ENCODE measurements at regions of chr10 and their contacts with region 1.

Region 1: DNA sequence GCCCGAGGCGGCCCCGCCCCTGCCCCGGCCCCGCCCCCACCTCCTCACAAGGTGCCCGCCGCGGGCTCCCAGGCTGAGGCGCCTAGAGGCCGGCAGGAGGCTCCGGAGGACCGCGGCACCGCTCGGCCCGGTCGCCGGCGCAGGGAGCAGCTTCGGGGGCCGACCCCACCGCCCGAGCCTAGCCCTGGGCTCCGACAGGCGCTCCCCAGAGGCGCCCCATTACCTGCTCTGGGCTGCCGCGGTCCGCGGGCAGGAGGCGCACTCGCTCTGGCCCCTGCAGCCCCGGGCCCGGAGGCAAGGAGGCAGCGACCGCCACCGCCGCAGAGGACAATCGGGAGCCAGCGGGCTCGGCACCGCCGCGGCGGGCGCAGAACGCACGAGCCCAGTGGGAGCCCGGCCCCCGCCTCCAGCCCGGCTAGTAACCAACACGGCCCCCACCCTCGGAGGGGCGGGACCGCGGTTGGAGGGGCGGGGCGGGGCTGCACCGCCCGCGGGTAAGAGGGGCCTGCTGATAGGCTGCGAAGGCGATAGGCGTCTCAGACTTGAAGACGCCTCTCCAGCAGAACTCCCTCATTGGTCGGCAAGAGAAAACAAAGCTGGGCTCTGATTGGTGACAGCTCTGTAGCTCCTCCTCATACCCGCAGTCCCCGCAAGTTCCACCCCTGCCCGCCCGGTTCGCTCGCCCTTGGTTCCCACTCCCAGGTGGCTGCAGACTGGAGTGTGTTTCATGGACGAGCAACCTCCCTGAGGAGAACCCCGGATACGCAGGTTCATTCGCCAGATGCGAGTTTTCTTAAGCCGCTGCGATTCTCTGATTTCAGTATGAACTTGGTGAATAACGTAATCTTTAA is at the start of gene MPP7:
- DNase-seq: peak; percentile 92 to 98 (median 96)
- ATAC-seq: peak; percentile 90 to 93 (median 92)
- H3K4me3 ChIP-seq: peak within 1 kb of the TSS; percentile 67 to 83
- H3K4me3 Mint-ChIP-seq: peak within 1 kb of the TSS; percentile 85 to 92 (median 85)
- H3K27ac ChIP-seq: peak within 1 kb of the TSS; percentile 54
- H3K27ac Mint-ChIP-seq: peak within 1 kb of the TSS; percentile 88 to 95
- H3K4me1 ChIP-seq: peaks cover 7 to 16% of the 10 kb centered on the region in 2 experiments
- H3K4me1 Mint-ChIP-seq: peaks cover 60 to 80% (median 75%) of the 10 kb centered on the region in 3 donors
- H3K27me3 ChIP-seq: no peaks in the 10 kb centered on the region
- H3K27me3 Mint-ChIP-seq: no peaks in the 10 kb centered on the region
- total RNA-seq, gene MPP7: 22.8 to 35.8 (median 26.0) TPM

Region 2: DNA sequence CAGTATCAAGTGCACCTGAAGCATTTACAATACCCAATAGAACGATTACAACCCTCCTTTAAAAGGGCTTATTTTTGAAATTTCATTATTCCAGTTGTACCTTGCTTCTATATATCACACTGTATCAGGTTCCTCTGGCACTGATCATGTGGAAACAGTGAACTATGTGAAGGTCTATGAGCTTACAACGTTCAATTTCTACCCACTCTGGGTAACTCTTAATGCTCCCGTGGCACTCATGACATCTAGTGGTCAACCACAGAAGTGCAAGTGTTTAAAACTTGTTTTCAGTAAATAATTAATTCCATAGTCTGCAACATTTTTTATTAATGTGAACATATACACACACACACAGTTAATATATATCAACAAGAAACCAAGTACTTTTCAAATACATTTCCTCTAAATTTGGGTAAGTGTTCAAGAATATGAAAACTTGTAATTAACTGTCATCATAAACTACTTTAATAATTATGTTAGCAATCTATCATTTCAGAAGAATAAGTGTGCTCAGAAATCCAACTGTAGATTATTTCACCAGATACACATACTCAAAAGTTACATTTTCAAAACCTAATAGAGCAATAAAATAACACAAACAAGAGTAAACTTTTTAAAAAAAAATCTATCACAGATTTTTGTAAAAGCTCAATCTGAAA is 61.0 kb before region 1 on chr10:
- CTCF ChIA-PET with region 1: interaction called, 3 to 17 read pairs
- POLR2A ChIA-PET with region 1: no interaction called
- DNase-seq: peak in 22 of 35 experiments; percentile 3 to 72 (median 22)
- ATAC-seq: peak; percentile 63 to 75 (median 66)
- H3K4me3 ChIP-seq: no peak overlapping the region
- H3K4me3 Mint-ChIP-seq: no peak overlapping the region
- H3K27ac ChIP-seq: no peak overlapping the region
- H3K27ac Mint-ChIP-seq: no peak overlapping the region
- H3K4me1 ChIP-seq: peaks cover 0 to 14% of the 10 kb centered on the region in 2 experiments
- H3K4me1 Mint-ChIP-seq: peaks cover 32 to 42% (median 38%) of the 10 kb centered on the region in 3 donors
- H3K27me3 ChIP-seq: no peaks in the 10 kb centered on the region
- H3K27me3 Mint-ChIP-seq: no peaks in the 10 kb centered on the region

Region 3: DNA sequence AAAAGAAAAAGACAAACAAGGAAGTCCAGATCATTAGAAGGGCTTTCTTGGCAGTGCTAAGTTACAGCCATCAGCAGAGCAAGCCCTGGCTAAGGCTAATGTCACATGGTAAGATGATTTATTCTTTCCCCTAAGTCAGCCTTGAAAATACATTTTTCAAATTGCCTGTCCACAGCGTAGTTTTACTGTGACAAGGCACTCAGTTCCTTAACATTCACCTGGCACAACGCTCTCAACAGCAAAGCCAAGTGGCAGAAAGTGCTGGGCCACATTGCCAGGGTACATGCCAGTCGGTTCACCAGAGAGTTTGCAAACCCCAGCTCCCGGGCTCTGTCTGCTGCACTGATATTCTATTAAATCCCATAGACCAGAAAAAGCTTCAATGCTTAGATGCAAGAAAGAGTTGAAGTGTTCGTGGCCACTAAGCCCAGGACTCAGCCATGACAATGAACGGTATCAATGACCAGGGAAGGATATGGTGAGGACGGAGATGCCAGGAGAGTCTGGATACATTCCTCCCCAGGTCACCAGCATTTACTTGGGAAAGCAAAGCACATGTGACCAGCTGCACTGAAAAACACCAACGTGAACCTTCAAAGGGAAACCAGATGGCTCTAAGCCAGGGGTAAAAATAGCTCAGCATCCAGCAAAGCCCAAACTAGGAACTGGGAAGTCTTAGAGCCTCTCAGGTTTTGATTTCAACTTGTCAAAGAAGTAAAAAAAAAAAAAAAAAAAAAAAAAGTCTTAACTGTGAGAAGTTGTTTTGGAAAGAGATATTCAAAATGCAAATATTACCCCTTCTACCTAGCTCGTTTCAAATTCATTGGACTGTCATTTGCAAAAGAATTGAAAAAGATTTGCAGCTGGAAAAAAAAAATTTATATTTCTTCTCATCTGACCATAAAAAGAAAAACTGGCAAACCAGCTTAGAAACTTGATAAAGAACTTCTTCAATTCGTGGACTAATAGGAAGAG is 23.9 kb after region 1 on chr10:
- CTCF ChIA-PET with region 1: interaction called, 4 to 91 read pairs
- POLR2A ChIA-PET with region 1: interaction called, 18 to 127 read pairs
- DNase-seq: no peak
- ATAC-seq: peak in 1 of 4 experiments; percentile 30
- H3K4me3 ChIP-seq: no peak overlapping the region
- H3K4me3 Mint-ChIP-seq: peak overlapping the region in 1 of 3 donors; percentile 66
- H3K27ac ChIP-seq: no peak overlapping the region
- H3K27ac Mint-ChIP-seq: peak overlapping the region in 1 of 2 donors; percentile 71
- H3K4me1 ChIP-seq: peaks cover 28 to 30% of the 10 kb centered on the region in 2 experiments
- H3K4me1 Mint-ChIP-seq: peaks cover 69 to 81% (median 74%) of the 10 kb centered on the region in 3 donors
- H3K27me3 ChIP-seq: no peaks in the 10 kb centered on the region
- H3K27me3 Mint-ChIP-seq: no peaks in the 10 kb centered on the region

Region 4: GRCh38 chr10:28367929-28368484 is 65.1 kb after region 1 on chr10:
- CTCF ChIA-PET with region 1: interaction called, 3 to 30 read pairs
- POLR2A ChIA-PET with region 1: interaction called, 7 to 30 read pairs
- DNase-seq: peak; percentile 20 to 87 (median 54)
- ATAC-seq: peak; percentile 96 to 98 (median 98)
- H3K4me3 ChIP-seq: peak overlapping the region in 1 of 2 donors; percentile 32
- H3K4me3 Mint-ChIP-seq: peak overlapping the region; percentile 40 to 73 (median 54)
- H3K27ac ChIP-seq: peak overlapping the region; percentile 72
- H3K27ac Mint-ChIP-seq: peak overlapping the region; percentile 95 to 100
- H3K4me1 ChIP-seq: peaks cover 34 to 56% of the 10 kb centered on the region in 2 experiments
- H3K4me1 Mint-ChIP-seq: peaks cover 53 to 68% (median 62%) of the 10 kb centered on the region in 3 donors
- H3K27me3 ChIP-seq: no peaks in the 10 kb centered on the region
- H3K27me3 Mint-ChIP-seq: no peaks in the 10 kb centered on the region

Region 5: GRCh38 chr10:28393966-28394568 is 91.2 kb after region 1 on chr10:
- CTCF ChIA-PET with region 1: interaction called, 5 to 10 read pairs
- POLR2A ChIA-PET with region 1: no interaction called
- DNase-seq: peak; percentile 3 to 83 (median 53)
- ATAC-seq: peak; percentile 75 to 87 (median 76)
- H3K4me3 ChIP-seq: no peak overlapping the region
- H3K4me3 Mint-ChIP-seq: no peak overlapping the region
- H3K27ac ChIP-seq: no peak overlapping the region
- H3K27ac Mint-ChIP-seq: no peak overlapping the region
- H3K4me1 ChIP-seq: peaks cover 0 to 4% of the 10 kb centered on the region in 2 experiments
- H3K4me1 Mint-ChIP-seq: peaks cover 4 to 7% (median 5%) of the 10 kb centered on the region in 3 donors
- H3K27me3 ChIP-seq: peaks cover 0 to 2% of the 10 kb centered on the region in 2 experiments
- H3K27me3 Mint-ChIP-seq: peaks cover 2 to 4% of the 10 kb centered on the region in 2 donors